GM10248 (cell line): ENCODE measurements at regions of chr11 and their contacts with region 1.

Region 1: DNA sequence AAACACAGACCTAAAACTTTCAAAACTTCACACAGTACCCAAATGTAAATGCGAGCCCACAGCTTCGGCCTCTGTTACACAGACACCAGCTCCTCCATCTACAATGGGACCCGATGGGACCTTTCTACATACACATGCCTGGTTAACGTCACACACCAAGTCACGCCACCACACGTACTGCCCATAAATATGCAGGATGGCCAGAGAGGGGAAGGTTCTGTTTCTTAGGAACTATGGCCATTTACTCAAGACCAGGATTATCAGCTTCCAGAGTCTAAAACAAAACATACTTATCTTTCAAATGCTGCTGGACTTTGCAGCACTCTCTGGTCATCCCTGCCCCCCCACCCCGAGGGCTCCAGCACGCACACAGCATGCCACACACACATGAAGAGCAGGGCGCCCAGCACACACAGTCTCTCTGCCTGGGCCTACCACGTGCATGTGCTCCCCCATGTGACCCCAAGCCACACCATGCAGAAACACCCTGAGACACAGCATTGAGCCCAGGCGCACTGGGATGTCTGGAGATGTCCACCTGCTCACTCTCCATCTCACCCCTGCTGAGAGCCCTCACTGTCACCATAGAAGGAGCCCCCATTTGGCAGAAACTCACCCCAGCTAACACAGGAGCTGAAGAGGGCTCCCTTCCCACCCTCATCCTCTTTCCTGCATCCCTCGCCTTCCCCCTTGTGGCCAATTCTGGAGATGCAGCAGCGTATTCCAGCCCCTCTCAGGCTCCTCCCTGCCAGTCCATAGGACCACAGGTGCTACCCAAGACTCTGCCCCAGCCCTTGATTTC is 61.8 kb downstream of the SLC22A12 start:
- DNase-seq: peak; percentile 85
- CTCF ChIP-seq: peak; percentile 89

Region 2: GRCh38 chr11:64638018-64638665 is 14.6 kb before region 1 on chr11:
- CTCF ChIA-PET with region 1: interaction called, 13 read pairs
- POLR2A ChIA-PET with region 1: no interaction called
- DNase-seq: no peak
- CTCF ChIP-seq: no peak

Region 3: GRCh38 chr11:64675450-64676260 is 22.9 kb after region 1 on chr11:
- CTCF ChIA-PET with region 1: interaction called, 13 read pairs
- POLR2A ChIA-PET with region 1: no interaction called
- DNase-seq: peak; percentile 60
- CTCF ChIP-seq: no peak